Activated CD4-positive, alpha-beta memory T cell treated with anti-CD3 and anti-CD28 coated beads for 36 hours (primary cell): ENCODE measurements at regions of chr21 and their contacts with region 1.

Region 1: GRCh38 chr21:44454747-44455523 is at the start of gene LRRC3:
- DNase-seq: peak; percentile 91
- H3K4me3 Mint-ChIP-seq: peak within 1 kb of the TSS; percentile 69
- H3K27ac Mint-ChIP-seq: no peak within 1 kb of the TSS
- H3K4me1 Mint-ChIP-seq: no peaks in the 10 kb centered on the region
- H3K27me3 Mint-ChIP-seq: peaks cover 9% of the 10 kb centered on the region
- total RNA-seq, gene LRRC3: 2.6 to 2.8 TPM

Region 2: DNA sequence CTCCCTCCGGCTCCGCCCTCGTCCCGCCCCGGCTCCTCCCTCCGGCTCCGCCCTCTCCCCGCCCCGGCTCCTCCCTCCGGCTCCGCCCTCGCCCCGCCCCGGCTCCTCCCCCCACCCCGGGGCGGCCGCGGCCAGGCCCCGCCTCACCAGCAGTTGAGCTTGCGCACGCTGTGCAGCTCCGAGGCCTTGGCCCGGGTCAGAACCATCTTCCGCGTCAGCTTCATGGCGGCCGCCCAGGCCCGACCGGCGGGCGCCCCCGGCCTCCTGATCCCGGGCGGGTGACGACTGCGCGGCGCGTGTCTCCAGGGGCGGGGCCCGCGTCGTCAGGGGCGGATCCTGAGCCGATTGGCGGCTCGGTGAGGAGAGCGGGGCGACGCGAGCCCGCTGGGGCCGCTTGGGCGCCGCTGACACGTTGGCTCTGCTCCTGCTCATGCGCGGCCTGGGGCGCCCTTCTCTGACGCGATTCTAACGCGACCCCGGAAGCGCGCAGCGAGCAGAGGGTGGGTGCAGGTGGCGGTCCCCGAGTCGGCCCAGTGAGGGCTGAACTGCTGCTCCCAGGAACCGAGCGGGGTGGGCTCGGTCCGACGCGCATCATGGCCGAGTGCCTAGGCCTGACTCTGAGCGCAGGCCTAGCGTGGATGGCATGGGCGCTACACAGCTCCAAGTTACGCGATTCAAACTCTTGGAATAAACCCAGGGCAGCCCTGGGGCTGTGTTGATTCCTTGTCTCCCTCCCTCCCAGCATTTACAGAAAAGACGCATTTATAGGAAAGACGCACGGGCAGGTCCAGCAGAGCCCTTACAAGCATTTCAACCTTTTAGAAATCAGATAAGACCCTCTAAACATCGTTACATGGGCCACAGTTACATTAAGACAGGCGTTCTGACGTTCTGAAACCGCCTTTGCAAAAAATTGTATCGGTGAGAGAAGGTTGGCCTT is 115.7 kb before region 1 on chr21 and contains the start of gene CFAP410:
- CTCF ChIA-PET with region 1: interaction called, 4 read pairs
- POLR2A ChIA-PET with region 1: no interaction called
- intact Hi-C with region 1: loop called (anchors 10 kb)
- DNase-seq: peak; percentile 96
- H3K4me3 Mint-ChIP-seq: peak within 1 kb of the TSS; percentile 83
- H3K27ac Mint-ChIP-seq: peak within 1 kb of the TSS; percentile 89
- H3K4me1 Mint-ChIP-seq: peaks cover 16% of the 10 kb centered on the region
- H3K27me3 Mint-ChIP-seq: no peaks in the 10 kb centered on the region
- total RNA-seq, gene CFAP410: 11.1 to 11.7 TPM

Region 3: GRCh38 chr21:44428281-44428942 is 26.5 kb before region 1 on chr21:
- CTCF ChIA-PET with region 1: no interaction called
- POLR2A ChIA-PET with region 1: no interaction called
- intact Hi-C with region 1: loop called (anchors 2 kb)
- DNase-seq: peak; percentile 63
- H3K4me3 Mint-ChIP-seq: no peak overlapping the region
- H3K27ac Mint-ChIP-seq: no peak overlapping the region
- H3K4me1 Mint-ChIP-seq: no peaks in the 10 kb centered on the region
- H3K27me3 Mint-ChIP-seq: no peaks in the 10 kb centered on the region